Pancreas (tissue), 10 donors: ENCODE measurements at regions of chr1 and their contacts with region 1.

Region 1: DNA sequence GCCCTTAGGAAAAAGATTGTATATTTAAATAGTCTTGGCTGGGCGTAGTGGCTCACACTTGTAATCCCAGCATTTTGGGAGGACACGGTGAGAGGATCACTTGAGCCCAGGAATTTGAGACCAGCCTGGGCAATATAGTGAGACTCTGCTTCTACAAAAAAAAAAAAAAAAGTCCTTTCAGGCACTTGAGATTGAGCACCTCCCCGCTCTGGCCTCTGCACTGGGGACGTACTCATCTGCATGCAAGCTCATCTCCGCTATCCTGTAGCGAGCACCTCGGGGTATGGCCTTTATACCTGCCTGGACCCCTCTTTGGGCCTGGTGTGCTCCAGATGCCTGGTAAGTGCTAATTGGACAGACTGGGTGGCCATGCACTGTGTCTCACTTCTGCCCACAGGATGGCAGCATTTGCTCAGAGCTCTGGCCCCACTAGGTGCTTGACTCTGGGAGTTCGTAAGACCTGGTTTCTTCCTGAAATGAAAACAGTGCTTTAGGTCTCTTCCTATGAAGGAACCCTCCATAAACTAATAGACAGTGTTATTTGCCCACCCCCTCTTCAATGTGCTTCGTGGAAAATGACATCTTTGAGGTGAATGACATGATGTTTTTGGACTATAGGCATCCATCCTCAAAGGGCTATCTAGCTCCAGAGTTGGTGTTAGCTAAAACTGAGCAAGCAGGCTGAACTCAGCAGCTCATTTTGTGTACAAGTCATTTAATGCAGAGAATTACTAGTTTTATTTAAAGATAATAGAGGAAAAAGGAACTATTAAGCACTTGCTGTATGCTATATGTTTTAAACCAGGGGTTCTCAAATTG is 61.7 kb upstream of the ADAR start:
- DNase-seq: peak; percentile 35 to 64 (median 53)
- ATAC-seq: peak; percentile 79 to 99 (median 96)
- H3K4me3 ChIP-seq: no peak overlapping the region
- H3K27ac ChIP-seq: no peak overlapping the region
- H3K4me1 ChIP-seq: no peaks in the 10 kb centered on the region
- H3K27me3 ChIP-seq: no peaks in the 10 kb centered on the region
- CTCF ChIP-seq: peak in 3 of 4 donors; percentile 44

Region 2: DNA sequence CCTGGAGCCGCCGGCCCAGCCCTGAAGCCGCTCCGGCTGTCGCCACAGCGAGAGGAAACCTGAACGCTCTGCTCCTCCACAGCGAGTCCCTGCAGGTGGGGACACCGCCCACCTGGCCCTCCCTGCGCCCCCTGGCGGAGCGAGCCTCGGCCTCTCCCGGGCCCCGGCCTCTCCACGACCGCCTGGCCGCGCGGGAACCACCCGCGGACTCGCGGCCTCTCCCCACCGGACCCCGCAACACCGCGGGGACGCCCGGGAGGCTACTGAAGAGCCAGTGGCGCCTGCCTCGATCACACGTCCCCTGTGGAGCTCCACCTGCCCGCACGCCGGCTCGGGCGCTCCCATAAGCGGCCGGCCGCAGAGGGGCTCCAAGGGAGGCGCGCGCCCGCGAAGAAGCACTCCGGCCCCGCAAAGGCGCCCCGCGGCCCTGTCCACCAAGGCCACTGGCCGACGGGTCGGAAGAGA is 90.8 kb after region 1 on chr1:
- intact Hi-C with region 1: loop called in 1 of 3 experiments (anchors 10 kb)
- DNase-seq: peak; percentile 65 to 97 (median 80)
- ATAC-seq: peak; percentile 98 to 100 (median 100)
- H3K4me3 ChIP-seq: peak overlapping the region in 3 of 4 donors; percentile 3 to 49 (median 30)
- H3K27ac ChIP-seq: no peak overlapping the region
- H3K4me1 ChIP-seq: no peaks in the 10 kb centered on the region
- H3K27me3 ChIP-seq: peaks cover 0 to 1% (median 0%) of the 10 kb centered on the region in 4 donors
- CTCF ChIP-seq: peak; percentile 56 to 80 (median 76)

Region 3: DNA sequence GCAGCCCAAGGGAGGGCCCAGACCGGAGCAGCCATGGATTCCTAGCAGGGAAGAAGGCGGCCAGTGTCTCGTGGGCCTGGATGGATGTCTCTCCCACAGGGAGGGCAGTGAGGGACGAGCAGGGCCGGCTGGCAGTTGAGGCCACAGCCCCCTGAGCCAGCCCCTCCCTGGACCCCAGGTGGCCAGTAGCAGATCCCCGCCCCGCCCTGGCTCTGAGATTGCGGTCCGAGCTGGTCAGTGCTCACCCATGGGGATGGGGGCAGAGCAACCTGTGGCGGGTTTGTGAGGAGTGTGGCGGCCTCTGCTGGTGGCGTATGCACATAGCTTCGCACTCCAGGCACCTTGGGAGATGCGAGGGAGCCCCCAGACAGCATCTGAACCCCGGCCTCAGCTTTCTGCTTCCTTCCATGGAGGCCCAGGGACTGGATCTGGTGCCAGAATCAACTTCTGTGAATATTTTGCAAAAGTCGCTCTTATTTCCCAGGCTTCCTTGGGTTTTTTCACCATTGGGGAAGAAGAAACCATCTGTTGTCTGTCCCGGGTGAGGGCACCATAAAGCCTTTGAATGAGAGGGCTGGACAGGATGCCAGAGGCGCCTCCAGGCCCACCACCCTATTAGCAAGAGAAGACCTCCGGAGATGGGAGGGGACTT is 208.8 kb after region 1 on chr1:
- intact Hi-C with region 1: loop called in 1 of 3 experiments (anchors 5 kb)
- DNase-seq: peak; percentile 65 to 92 (median 83)
- ATAC-seq: peak; percentile 87 to 97 (median 93)
- H3K4me3 ChIP-seq: no peak overlapping the region
- H3K27ac ChIP-seq: no peak overlapping the region
- H3K4me1 ChIP-seq: peaks cover 14 to 19% (median 16%) of the 10 kb centered on the region in 3 donors
- H3K27me3 ChIP-seq: no peaks in the 10 kb centered on the region
- CTCF ChIP-seq: peak; percentile 68 to 83 (median 78)